ENCODE measurements at regions of chr17 and their contacts with region 1.

Region 1: GRCh38 chr17:76279742-76280287 is 14.7 kb downstream of the UBALD2 start:
- DNase-seq: no peak
- H3K4me3 ChIP-seq: no peak overlapping the region
- H3K27ac ChIP-seq: no peak overlapping the region
- H3K4me1 ChIP-seq: peaks cover 17% of the 10 kb centered on the region
- H3K27me3 ChIP-seq: no peaks in the 10 kb centered on the region
- CTCF ChIP-seq: peak in 1 of 3 experiments; percentile 20
- POLR2A ChIP-seq: no peak

Region 2: GRCh38 chr17:76121932-76122430 is 157.8 kb before region 1 on chr17:
- intact Hi-C with region 1: loop called (anchors 5 kb)
- DNase-seq: peak; percentile 43
- H3K4me3 ChIP-seq: peak overlapping the region; percentile 45 to 49
- H3K27ac ChIP-seq: no peak overlapping the region
- H3K4me1 ChIP-seq: peaks cover 6% of the 10 kb centered on the region
- H3K27me3 ChIP-seq: no peaks in the 10 kb centered on the region
- CTCF ChIP-seq: no peak
- POLR2A ChIP-seq: no peak

Region 3: DNA sequence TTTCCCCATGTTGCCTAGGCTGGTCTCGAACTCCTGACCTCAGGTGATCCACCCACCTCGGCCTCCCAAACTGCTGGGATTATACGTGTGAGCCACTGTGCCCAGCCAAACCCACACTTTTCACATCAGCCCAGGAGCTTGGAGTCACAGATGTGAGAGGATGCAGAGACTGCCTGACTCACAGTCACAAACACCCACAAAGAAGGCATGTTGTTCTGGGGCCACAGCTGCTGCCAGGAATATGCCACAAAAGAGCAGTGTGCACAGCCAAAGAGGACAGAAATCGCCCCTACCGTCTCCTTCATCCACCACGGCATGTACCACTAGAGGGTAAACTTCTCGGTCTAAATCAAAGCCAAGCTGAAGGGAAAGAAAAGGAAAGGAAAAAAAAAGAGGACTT is 113.6 kb before region 1 on chr17:
- intact Hi-C with region 1: no loop called
- DNase-seq: peak; percentile 13
- H3K4me3 ChIP-seq: peak overlapping the region; percentile 4 to 43
- H3K27ac ChIP-seq: peak overlapping the region; percentile 73 to 86
- H3K4me1 ChIP-seq: peaks cover 42% of the 10 kb centered on the region
- H3K27me3 ChIP-seq: no peaks in the 10 kb centered on the region
- CTCF ChIP-seq: no peak
- POLR2A ChIP-seq: no peak

Measured in testis (tissue), 5 donors.